Pancreas (tissue), 10 donors: ENCODE measurements at regions of chr16 and their contacts with region 1.

Region 1: DNA sequence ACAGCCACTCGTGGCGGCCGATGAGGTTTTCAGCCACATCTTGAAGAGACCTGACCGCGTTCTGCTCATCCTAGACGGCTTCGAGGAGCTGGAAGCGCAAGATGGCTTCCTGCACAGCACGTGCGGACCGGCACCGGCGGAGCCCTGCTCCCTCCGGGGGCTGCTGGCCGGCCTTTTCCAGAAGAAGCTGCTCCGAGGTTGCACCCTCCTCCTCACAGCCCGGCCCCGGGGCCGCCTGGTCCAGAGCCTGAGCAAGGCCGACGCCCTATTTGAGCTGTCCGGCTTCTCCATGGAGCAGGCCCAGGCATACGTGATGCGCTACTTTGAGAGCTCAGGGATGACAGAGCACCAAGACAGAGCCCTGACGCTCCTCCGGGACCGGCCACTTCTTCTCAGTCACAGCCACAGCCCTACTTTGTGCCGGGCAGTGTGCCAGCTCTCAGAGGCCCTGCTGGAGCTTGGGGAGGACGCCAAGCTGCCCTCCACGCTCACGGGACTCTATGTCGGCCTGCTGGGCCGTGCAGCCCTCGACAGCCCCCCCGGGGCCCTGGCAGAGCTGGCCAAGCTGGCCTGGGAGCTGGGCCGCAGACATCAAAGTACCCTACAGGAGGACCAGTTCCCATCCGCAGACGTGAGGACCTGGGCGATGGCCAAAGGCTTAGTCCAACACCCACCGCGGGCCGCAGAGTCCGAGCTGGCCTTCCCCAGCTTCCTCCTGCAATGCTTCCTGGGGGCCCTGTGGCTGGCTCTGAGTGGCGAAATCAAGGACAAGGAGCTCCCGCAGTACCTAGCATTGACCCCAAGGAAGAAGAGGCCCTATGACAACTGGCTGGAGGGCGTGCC is 30.1 kb downstream of the CIITA start:
- DNase-seq: no peak
- ATAC-seq: peak in 1 of 4 donors; percentile 21
- H3K4me3 ChIP-seq: no peak overlapping the region
- H3K27ac ChIP-seq: no peak overlapping the region
- H3K4me1 ChIP-seq: no peaks in the 10 kb centered on the region
- H3K27me3 ChIP-seq: no peaks in the 10 kb centered on the region
- CTCF ChIP-seq: no peak

Region 2: GRCh38 chr16:10840703-10841102 is 66.4 kb before region 1 on chr16:
- intact Hi-C with region 1: loop called in 2 of 3 experiments (anchors 5 to 10 kb)
- DNase-seq: no peak
- ATAC-seq: no peak
- H3K4me3 ChIP-seq: no peak overlapping the region
- H3K27ac ChIP-seq: no peak overlapping the region
- H3K4me1 ChIP-seq: peaks cover 0 to 14% (median 5%) of the 10 kb centered on the region in 3 donors
- H3K27me3 ChIP-seq: no peaks in the 10 kb centered on the region
- CTCF ChIP-seq: no peak

Region 3: GRCh38 chr16:10846213-10846998 is 60.7 kb before region 1 on chr16:
- intact Hi-C with region 1: loop called in 2 of 3 experiments (anchors 5 to 10 kb)
- DNase-seq: no peak
- ATAC-seq: peak in 2 of 4 donors; percentile 51 to 56
- H3K4me3 ChIP-seq: no peak overlapping the region
- H3K27ac ChIP-seq: peak overlapping the region in 1 of 4 donors; percentile 31
- H3K4me1 ChIP-seq: no peaks in the 10 kb centered on the region
- H3K27me3 ChIP-seq: no peaks in the 10 kb centered on the region
- CTCF ChIP-seq: no peak

Region 4: DNA sequence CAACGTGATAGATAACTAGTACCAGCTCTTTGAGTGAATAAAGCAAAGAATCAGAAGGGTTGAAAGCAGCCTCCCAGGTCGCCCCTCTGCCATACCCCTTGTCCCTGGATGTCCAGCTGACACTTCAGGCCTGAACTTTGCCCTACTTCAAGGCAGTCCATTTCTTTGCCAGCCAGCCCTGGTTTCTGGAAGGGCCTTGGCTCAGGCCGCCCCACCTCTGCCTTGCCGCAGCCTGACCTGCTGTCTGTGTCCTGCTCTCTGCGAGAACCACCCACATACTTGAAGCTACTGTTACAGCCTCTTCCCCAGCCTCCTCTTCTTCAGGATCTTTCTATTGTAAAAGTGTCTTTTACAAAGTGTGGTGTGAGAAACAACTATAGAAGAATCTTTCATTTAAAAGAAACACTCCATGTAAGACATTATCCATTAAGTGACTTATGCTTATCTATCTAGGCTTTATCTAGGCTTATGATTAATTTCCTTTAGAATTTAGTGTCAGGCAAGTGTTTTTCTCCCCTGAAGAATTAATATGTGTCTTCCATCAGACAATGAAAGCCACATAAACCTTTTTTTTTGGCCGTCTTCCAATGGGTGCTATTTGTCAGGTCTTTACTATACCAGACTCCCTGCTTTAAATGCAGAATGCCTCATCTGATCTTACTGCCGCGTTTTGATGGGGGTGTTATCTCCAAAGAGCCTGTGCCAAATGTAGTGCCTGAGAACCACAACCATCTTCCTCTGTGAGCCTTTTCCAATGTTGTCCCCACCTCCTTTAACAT is 215.0 kb after region 1 on chr16:
- intact Hi-C with region 1: no loop called
- DNase-seq: no peak
- ATAC-seq: no peak
- H3K4me3 ChIP-seq: no peak overlapping the region
- H3K27ac ChIP-seq: no peak overlapping the region
- H3K4me1 ChIP-seq: no peaks in the 10 kb centered on the region
- H3K27me3 ChIP-seq: no peaks in the 10 kb centered on the region
- CTCF ChIP-seq: no peak